Activated naive CD4-positive, alpha-beta T cell treated with anti-CD3 and anti-CD28 coated beads for 36 hours (primary cell): ENCODE measurements at regions of chr16 and their contacts with region 1.

Region 1: GRCh38 chr16:87492721-87493607 is at the start of gene ZCCHC14:
- DNase-seq: peak; percentile 100
- H3K4me3 Mint-ChIP-seq: peak within 1 kb of the TSS; percentile 76
- H3K27ac Mint-ChIP-seq: peak within 1 kb of the TSS; percentile 78
- H3K4me1 Mint-ChIP-seq: peaks cover 48% of the 10 kb centered on the region
- H3K27me3 Mint-ChIP-seq: no peaks in the 10 kb centered on the region
- total RNA-seq, gene ZCCHC14: 12.4 to 13.9 TPM

Region 2: DNA sequence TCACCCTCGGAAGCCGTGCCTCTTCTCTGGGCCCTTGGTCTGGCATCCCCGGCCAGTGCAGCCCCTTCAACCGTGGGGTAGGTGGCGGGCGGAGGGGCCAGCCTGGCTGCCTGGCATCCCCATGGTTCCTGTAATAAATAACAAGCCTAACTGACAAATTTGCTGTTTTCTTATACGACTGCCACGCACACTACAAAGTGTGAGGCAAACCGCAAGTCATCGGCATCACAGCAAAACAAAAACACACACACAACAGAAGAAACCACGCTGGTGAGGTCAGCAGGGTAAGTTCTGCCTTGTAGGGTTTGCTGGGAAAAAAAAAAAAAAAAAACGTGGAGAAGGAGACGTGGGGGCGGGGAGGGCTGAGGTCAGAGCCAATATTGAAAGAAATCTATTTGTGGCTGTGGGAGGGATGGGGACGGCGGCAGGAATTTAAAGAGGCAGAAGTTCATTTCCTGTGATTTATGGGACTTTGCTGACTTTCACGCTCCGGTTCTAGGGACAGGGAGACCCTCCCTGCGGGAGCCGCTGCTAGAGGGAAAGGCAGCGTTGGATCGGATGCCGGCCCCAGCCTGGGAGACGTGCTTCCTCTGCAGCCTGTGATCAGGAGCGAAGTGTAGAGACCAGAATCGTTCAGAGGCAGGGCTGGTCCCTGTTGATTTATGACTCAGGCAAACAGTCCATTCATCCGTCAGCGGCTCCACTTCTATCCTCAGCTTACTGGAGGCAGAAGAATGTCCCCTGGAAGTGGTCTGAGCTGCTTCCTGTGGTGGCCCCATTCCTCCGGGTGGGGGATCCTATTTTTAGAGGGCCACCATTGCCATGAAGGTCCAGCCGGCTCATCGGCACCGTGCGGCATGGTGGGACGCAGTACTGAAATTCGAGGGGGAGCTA is 751.8 kb before region 1 on chr16:
- CTCF ChIA-PET with region 1: no interaction called
- intact Hi-C with region 1: no loop called
- DNase-seq: peak; percentile 10
- H3K4me3 Mint-ChIP-seq: no peak overlapping the region
- H3K27ac Mint-ChIP-seq: no peak overlapping the region
- H3K4me1 Mint-ChIP-seq: peaks cover 11% of the 10 kb centered on the region
- H3K27me3 Mint-ChIP-seq: peaks cover 42% of the 10 kb centered on the region

Region 3: GRCh38 chr16:87316923-87317749 is 175.8 kb before region 1 on chr16 and contains the start of gene C16orf95:
- CTCF ChIA-PET with region 1: no interaction called
- intact Hi-C with region 1: loop called (anchors 2 kb)
- DNase-seq: peak; percentile 98
- H3K4me3 Mint-ChIP-seq: peak within 1 kb of the TSS; percentile 88
- H3K27ac Mint-ChIP-seq: peak within 1 kb of the TSS; percentile 91
- H3K4me1 Mint-ChIP-seq: peaks cover 17% of the 10 kb centered on the region
- H3K27me3 Mint-ChIP-seq: no peaks in the 10 kb centered on the region
- total RNA-seq, gene C16orf95: 17.2 to 23.4 TPM

Region 4: DNA sequence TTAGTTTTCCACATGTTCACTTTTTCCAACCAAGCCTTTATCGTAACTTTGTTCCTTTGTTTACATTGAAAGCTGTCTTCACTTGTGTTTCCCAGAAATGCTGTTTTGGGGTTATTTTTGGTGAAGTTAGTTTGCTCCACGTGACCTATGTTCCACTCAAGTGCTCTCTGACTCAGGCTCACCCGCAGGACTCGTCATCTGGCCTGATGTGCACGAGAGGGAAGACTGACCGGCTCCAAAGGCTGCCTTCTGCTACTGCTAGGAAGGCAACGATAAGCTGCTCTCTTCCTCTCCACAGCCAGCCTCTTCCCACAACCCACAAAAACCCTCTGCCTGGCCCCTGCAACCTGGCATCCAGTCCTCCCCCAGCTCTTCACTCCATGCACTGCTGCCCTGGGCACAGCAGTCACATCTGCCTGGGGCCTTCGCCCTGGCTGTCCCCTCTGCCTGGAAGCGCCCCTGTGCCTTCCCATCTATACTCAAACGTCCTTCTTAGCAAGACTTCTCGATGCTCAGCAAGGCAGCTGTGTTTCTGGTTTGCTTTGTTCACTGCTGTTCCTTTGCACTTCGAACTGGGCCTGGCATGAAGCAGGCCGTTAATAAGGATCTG is 28.2 kb before region 1 on chr16:
- CTCF ChIA-PET with region 1: interaction called, 5 read pairs
- intact Hi-C with region 1: loop called (anchors 1 kb)
- DNase-seq: peak; percentile 74
- H3K4me3 Mint-ChIP-seq: peak overlapping the region; percentile 69
- H3K27ac Mint-ChIP-seq: peak overlapping the region; percentile 92
- H3K4me1 Mint-ChIP-seq: peaks cover 51% of the 10 kb centered on the region
- H3K27me3 Mint-ChIP-seq: no peaks in the 10 kb centered on the region

Region 5: GRCh38 chr16:87877938-87878507 is 385.1 kb after region 1 on chr16:
- CTCF ChIA-PET with region 1: no interaction called
- intact Hi-C with region 1: loop called (anchors 10 kb)
- DNase-seq: peak; percentile 71
- H3K4me3 Mint-ChIP-seq: no peak overlapping the region
- H3K27ac Mint-ChIP-seq: no peak overlapping the region
- H3K4me1 Mint-ChIP-seq: peaks cover 47% of the 10 kb centered on the region
- H3K27me3 Mint-ChIP-seq: peaks cover 5% of the 10 kb centered on the region

Region 6: DNA sequence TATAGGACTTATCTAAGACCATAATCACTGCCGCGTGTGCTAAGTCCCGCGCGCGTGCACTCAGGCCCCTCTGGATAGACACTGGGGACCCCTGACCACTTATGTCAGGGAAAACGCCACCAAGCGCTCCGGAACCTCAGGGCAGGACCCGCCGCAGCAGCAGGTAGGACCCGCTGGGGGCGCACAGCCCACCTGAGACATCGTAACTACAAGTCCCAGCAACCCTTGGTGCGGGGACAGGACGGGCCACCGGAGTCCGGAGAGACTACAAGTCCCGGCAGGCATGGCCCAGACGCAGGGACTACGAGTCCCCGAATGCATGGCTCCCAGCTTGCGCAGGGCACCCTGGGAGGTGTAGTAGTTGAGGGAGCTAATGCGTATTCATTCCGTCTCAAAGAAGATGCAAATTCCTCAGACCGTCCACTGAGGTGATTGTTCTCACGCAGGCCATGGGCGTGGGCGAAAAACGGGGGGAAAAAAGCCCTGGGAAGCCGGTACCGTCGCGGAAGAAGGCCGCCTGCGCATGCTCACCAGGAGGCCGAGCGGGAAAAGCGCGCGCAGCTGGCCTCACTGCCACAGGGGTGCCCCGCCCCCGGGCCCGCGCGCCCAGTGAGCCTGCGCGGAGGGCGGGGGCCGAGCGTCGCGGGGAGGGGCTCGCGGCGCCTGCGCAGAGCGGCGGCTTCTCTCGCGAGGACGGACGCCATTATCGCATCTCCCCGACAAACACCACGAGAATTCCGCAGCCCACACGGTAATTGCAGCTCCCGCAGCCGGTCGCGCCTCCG is 458.0 kb after region 1 on chr16 and contains the start of gene BANP:
- CTCF ChIA-PET with region 1: no interaction called
- intact Hi-C with region 1: loop called (anchors 2 kb)
- DNase-seq: peak; percentile 98
- H3K4me3 Mint-ChIP-seq: peak within 1 kb of the TSS; percentile 85
- H3K27ac Mint-ChIP-seq: peak within 1 kb of the TSS; percentile 99
- H3K4me1 Mint-ChIP-seq: peaks cover 41% of the 10 kb centered on the region
- H3K27me3 Mint-ChIP-seq: no peaks in the 10 kb centered on the region
- total RNA-seq, gene BANP: 35.1 to 38.6 TPM